GM13976 (cell line): ENCODE measurements at regions of chr16 and their contacts with region 1.

Region 1: GRCh38 chr16:10509534-10510025 is 70.8 kb downstream of the EMP2 start:
- DNase-seq: peak; percentile 78
- CTCF ChIP-seq: peak; percentile 67

Region 2: DNA sequence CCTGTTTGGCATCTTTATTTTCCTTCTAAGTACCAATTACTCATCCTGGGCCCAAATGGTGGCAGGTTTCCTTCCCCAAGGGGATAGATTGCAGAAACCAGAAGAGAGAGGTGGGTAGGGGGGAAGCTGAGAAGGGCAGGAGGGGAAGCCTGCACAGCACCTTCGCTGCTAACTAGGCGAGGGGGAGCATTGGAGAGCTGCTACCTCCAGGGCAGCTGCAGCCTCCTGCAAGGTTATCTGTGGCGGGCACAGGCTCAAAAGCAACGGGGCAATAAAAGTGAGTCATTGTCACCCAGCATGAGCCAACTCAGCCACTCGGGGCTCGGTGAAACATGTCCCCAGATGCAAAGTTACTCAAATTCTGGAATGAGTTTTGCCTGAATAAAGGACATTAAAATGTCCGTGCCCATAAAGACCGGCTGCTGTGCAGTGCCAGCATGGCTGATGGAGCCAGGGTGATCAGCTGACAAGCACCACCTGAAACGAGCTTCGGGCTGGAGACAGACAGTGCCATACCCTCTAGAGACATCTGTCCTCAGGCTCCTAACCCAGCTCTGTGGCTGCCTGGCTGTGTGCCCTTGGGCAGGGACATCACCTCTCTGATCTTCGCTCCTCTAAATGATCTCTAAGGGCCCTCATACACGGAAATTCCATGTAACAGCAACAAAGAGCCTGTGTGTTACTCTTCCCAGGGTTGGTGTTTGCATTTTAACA is 259.3 kb before region 1 on chr16:
- in situ Hi-C with region 1: loop called (anchors 5 kb)
- DNase-seq: no peak
- CTCF ChIP-seq: no peak

Region 3: DNA sequence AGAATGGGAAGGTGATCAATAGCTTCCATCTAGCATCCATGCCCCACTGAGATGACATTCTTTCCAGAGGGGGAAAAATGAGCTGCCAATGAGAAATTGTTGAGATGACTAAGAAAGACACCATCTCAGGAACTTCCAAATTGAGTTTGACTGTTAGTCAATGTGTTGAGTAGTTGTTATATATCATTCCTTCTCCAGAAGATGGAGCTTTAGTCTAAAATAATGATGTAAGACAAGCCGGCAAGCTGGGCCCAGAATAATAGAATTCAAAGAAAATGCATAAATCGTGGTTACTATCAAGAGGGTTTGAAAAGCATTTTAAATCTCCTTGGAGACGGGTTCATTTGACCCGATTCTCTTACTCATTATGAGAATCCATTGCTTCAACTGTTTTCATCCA is 194.8 kb before region 1 on chr16:
- in situ Hi-C with region 1: loop called (anchors 10 kb)
- DNase-seq: no peak
- CTCF ChIP-seq: peak; percentile 11

Region 4: DNA sequence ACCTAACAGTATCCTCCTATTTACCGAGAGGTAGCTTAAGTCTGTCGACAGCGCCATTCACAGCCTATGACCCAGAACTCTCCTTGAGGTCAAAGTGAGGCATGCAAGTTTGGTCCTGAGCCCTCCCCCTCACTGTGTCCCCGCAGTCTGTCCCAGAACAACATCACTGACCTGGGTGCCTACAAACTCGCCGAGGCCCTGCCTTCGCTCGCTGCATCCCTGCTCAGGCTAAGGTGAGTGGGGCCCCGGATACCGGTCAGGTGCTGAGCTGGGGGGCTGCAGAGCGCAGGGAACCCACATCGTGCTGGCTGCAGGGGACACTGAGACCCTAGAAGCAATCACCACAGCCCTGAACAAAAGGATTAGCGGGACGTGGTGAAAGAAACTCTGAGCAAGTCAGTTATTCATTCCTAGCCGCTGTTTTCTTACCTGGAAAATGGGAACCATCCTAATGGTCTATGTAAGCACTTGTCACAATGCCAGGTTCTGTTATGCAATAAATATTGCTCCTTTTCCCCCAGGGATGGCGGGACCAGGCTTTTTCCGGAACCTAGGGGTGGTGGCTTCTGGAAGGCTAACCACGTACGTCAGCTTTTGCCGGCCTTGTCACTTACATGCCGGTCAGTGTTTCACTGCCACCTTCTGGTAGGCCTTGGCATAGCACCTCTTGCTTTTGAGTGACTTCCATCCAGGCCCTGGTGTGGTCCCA is 408.9 kb after region 1 on chr16:
- in situ Hi-C with region 1: loop called (anchors 10 kb)
- DNase-seq: peak; percentile 83
- CTCF ChIP-seq: peak; percentile 93